ENCODE measurements at regions of chr16 and their contacts with region 1.

Region 1: DNA sequence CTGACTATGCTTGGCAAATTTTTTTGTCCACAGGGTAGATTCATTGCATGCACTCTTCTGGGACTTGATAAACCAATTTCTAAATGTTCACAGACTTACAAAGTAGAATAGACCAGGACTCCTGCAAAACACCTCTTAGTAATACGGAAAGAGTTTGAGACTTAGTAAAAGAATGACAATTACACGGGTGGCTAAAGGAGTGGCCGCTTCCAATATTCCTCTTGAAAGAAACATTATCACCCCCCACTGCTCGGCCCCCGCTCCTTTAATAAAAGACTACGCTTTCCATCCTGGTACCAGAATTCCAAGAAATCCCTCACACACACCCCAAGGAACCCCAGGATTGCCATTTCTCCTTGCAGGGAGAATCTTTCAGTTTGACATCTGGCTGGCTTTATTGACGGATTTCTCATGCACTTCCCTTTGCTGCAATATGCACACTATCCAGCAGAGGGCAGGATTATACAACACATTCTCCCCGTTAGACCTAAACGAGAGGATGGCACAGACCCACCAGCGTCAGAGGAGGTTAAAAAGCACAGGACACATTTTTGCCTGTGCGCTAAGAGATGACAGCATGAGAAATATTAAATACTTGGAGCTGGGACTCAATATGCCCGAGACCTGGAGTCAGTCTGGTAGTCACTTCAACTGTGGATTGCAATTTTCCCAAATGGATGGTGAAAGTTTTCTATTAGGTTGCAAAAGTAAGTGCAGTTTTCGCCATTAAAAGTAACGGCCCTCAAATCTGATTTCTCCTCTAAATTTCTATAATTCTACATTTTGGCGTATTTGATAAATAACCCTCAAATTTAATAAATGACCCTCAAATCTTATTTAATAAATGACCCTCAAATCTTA is 46.6 kb upstream of the NUDT7 start:
- DNase-seq: peak; percentile 75
- H3K4me3 ChIP-seq: no peak overlapping the region
- H3K27ac ChIP-seq: no peak overlapping the region
- H3K4me1 ChIP-seq: peaks cover 7% of the 10 kb centered on the region
- H3K27me3 ChIP-seq: no peaks in the 10 kb centered on the region
- CTCF ChIP-seq: peak; percentile 73 to 93 (median 92)
- POLR2A ChIP-seq: no peak

Region 2: DNA sequence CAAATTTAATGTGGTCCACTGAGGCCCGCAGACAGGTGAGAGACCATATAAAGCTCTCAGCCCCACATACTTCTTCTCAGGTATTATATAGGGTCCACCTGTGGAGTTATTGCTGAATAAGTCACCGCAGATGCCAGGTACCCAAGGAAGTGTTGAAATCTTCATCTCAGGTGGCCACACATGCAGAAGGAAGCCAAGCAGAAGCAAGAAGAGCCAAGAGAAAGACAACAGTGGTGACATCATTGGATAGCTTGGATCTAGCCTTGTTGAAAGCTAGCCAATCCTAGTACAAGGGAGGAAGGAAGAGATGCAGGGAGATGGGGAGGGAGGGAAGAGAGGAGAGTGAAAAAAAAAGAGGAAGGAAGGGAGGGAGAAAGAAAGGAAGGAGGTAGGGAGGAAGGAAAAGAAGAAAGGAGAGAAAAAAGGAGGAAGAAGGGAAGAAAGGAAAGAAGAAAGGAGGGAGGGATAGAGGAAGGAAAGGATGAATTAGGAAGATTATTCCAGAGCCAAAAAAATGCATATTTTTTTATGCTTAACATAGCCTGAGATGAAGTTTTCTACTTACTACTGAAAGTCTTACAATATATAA is 253.4 kb before region 1 on chr16:
- intact Hi-C with region 1: no loop called
- DNase-seq: no peak
- H3K4me3 ChIP-seq: no peak overlapping the region
- H3K27ac ChIP-seq: no peak overlapping the region
- H3K4me1 ChIP-seq: no peaks in the 10 kb centered on the region
- H3K27me3 ChIP-seq: no peaks in the 10 kb centered on the region
- CTCF ChIP-seq: no peak
- POLR2A ChIP-seq: no peak

Region 3: GRCh38 chr16:77971306-77972271 is 295.9 kb after region 1 on chr16:
- intact Hi-C with region 1: loop called (anchors 1 kb)
- DNase-seq: peak; percentile 78
- H3K4me3 ChIP-seq: no peak overlapping the region
- H3K27ac ChIP-seq: no peak overlapping the region
- H3K4me1 ChIP-seq: no peaks in the 10 kb centered on the region
- H3K27me3 ChIP-seq: no peaks in the 10 kb centered on the region
- CTCF ChIP-seq: peak; percentile 52 to 92 (median 80)
- POLR2A ChIP-seq: no peak

Measured in prostate gland (tissue), 2 donors.